ENCODE measurements at regions of chr3 and their contacts with region 1.

Region 1: DNA sequence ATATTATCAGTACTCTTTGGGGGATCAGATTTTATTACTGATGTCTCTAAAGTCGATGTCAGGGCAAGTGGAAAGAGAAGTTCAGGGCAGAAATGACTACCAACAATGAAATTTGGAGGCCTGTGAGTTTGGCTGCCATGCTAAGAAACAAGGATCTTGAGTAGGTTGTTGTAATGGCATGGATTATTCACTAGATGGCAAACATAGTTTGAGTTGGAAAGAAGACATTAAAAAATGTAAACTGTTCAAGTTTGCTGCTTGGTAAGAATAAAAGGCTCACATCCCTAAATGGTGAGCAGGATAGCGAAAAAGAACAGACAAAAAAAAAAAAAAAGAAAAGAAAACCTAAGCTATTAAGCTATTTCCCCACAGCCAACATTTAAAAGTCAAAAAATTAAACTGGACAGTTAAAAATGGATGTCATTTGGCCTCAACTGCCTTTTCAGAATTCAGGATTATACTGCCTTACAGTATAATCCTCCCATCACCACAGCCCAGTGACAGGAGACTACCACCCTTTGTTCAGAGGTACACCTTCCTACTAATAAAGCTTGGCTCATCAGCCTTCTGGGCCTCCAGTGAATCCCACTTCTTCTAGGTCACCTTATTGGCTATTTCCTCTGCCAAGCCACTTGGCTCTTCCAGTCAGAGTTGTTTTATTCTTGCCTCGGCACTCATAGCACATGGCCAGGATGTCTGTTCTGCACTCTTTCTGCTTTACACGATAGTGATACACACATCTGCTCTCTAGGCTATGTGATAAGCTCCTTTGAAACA is 163.7 kb downstream of the PLD1 start:
- DNase-seq: no peak
- H3K4me3 ChIP-seq: no peak overlapping the region
- H3K27ac ChIP-seq: peak overlapping the region in 30 of 59 donors; percentile 1 to 61 (median 25)
- H3K27me3 ChIP-seq: no peaks in the 10 kb centered on the region
- CTCF ChIP-seq: peak; percentile 34 to 83 (median 70)

Region 2: DNA sequence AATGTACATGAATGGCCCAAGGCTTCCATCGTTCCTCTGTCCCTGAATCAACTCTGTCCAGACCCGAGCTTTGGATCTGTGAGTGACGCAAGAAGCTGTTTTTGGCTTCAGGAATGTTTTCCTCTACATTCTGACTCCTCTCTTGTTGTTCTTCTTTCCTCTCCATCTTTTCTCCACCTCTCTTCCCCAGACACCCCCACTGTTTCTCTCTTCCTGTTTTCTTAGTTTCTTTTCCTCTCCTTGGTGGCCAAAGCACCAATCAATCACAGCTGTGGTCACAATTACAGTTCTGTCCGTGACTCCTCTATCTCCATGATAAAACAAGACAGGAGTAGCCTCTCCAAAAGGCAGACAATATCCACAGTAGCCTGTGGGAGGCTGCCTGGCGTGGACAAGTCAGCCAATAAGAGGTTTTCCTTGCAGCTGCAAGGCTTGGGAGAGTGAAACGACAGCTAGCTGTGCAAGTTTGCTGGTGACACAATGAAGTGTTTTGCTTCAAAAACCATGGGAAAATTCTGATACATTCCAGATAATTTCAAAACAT is 191.7 kb after region 1 on chr3:
- intact Hi-C with region 1: loop called (anchors 5 kb)
- DNase-seq: peak in 9 of 10 donors; percentile 16 to 68 (median 59)
- H3K4me3 ChIP-seq: peak overlapping the region in 58 of 59 donors; percentile 5 to 64 (median 36)
- H3K27ac ChIP-seq: peak overlapping the region; percentile 24 to 94 (median 82)
- H3K27me3 ChIP-seq: no peaks in the 10 kb centered on the region
- CTCF ChIP-seq: peak in 20 of 56 donors; percentile 6 to 50 (median 20)

Region 3: GRCh38 chr3:172341482-172342059 is 695.0 kb after region 1 on chr3:
- intact Hi-C with region 1: loop called in 1 of 2 experiments (anchors 5 kb)
- DNase-seq: no peak
- H3K4me3 ChIP-seq: no peak overlapping the region
- H3K27ac ChIP-seq: no peak overlapping the region
- H3K27me3 ChIP-seq: no peaks in the 10 kb centered on the region
- CTCF ChIP-seq: peak; percentile 54 to 88 (median 75)